Caco-2 (cell line): ENCODE measurements at regions of chr15 and their contacts with region 1.

Region 1: GRCh38 chr15:31128919-31129768 is 27.6 kb upstream of the TRPM1 start:
- DNase-seq: peak; percentile 71 to 86
- H3K4me3 ChIP-seq: no peak overlapping the region
- H3K4me3 Mint-ChIP-seq: no peak overlapping the region
- H3K27ac Mint-ChIP-seq: no peak overlapping the region
- H3K4me1 ChIP-seq: no peaks in the 10 kb centered on the region; the same call in 1 of the 2 replicates
- H3K4me1 Mint-ChIP-seq: no peaks in the 10 kb centered on the region
- H3K27me3 ChIP-seq: no peaks in the 10 kb centered on the region
- H3K27me3 Mint-ChIP-seq: no peaks in the 10 kb centered on the region
- CTCF ChIP-seq: peak; percentile 94 to 98

Region 2: GRCh38 chr15:30791239-30792175 is 337.6 kb before region 1 on chr15:
- CTCF ChIA-PET with region 1: interaction called, 3 read pairs
- POLR2A ChIA-PET with region 1: no interaction called
- intact Hi-C with region 1: loop called (anchors 10 kb)
- DNase-seq: peak; percentile 62 to 75
- H3K4me3 ChIP-seq: no peak overlapping the region
- H3K4me3 Mint-ChIP-seq: no peak overlapping the region
- H3K27ac Mint-ChIP-seq: no peak overlapping the region
- H3K4me1 ChIP-seq: no peaks in the 10 kb centered on the region
- H3K4me1 Mint-ChIP-seq: peaks cover 17% of the 10 kb centered on the region
- H3K27me3 ChIP-seq: no peaks in the 10 kb centered on the region
- H3K27me3 Mint-ChIP-seq: peaks cover 3% of the 10 kb centered on the region
- CTCF ChIP-seq: no peak

Region 3: GRCh38 chr15:30889196-30889595 is 239.9 kb before region 1 on chr15:
- CTCF ChIA-PET with region 1: interaction called, 37 read pairs
- POLR2A ChIA-PET with region 1: interaction called, 3 read pairs
- intact Hi-C with region 1: loop called (anchors 1 kb)
- DNase-seq: no peak
- H3K4me3 ChIP-seq: no peak overlapping the region
- H3K4me3 Mint-ChIP-seq: no peak overlapping the region
- H3K27ac Mint-ChIP-seq: no peak overlapping the region
- H3K4me1 ChIP-seq: no peaks in the 10 kb centered on the region
- H3K4me1 Mint-ChIP-seq: no peaks in the 10 kb centered on the region
- H3K27me3 ChIP-seq: no peaks in the 10 kb centered on the region
- H3K27me3 Mint-ChIP-seq: peaks cover 4% of the 10 kb centered on the region
- CTCF ChIP-seq: no peak

Region 4: DNA sequence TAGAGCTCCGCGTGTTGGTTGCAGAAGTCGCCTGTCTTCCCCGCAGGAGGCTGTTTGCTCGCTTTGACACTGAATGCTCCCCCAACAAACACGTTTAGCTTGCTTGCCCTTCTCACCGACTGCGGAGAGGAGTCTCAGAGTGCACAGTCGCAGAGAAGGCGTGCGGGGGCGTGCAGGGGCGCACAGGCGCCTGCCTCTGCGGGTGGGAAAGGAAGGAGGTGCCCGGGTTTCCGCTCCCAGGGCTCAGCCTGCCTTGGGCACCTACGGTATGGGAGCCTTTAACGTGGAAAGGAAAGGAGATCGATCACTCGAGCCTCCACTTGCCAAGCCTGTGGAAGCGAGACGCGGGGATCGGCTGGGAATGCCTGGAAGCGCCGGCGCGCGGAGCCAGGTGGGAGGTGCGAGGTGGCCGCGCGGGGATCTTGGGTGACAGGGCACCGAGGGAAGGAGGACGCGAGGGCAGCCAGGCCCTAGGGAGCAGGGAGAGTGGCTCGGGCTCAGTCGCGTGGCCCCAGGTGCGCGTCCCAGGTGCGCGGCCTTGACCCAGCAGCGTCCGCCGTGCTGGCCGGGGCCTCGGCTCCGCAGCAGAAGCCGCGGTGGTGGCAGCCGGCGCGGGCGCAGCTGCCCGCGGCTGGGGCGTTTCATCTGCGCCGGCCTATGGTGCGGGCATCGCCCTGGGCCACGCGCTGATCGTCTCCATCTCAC is 225.5 kb before region 1 on chr15 and contains the start of gene FAN1:
- CTCF ChIA-PET with region 1: interaction called, 21 read pairs
- POLR2A ChIA-PET with region 1: no interaction called
- intact Hi-C with region 1: no loop called
- DNase-seq: peak; percentile 91 to 94
- H3K4me3 ChIP-seq: peak within 1 kb of the TSS; percentile 96
- H3K4me3 Mint-ChIP-seq: peak within 1 kb of the TSS; percentile 97
- H3K27ac Mint-ChIP-seq: peak within 1 kb of the TSS; percentile 91
- H3K4me1 ChIP-seq: no peaks in the 10 kb centered on the region
- H3K4me1 Mint-ChIP-seq: peaks cover 6% of the 10 kb centered on the region
- H3K27me3 ChIP-seq: no peaks in the 10 kb centered on the region
- H3K27me3 Mint-ChIP-seq: no peaks in the 10 kb centered on the region
- CTCF ChIP-seq: no peak
- total RNA-seq, gene FAN1: 24.9 and 26.6 TPM in 2 replicates

Region 5: DNA sequence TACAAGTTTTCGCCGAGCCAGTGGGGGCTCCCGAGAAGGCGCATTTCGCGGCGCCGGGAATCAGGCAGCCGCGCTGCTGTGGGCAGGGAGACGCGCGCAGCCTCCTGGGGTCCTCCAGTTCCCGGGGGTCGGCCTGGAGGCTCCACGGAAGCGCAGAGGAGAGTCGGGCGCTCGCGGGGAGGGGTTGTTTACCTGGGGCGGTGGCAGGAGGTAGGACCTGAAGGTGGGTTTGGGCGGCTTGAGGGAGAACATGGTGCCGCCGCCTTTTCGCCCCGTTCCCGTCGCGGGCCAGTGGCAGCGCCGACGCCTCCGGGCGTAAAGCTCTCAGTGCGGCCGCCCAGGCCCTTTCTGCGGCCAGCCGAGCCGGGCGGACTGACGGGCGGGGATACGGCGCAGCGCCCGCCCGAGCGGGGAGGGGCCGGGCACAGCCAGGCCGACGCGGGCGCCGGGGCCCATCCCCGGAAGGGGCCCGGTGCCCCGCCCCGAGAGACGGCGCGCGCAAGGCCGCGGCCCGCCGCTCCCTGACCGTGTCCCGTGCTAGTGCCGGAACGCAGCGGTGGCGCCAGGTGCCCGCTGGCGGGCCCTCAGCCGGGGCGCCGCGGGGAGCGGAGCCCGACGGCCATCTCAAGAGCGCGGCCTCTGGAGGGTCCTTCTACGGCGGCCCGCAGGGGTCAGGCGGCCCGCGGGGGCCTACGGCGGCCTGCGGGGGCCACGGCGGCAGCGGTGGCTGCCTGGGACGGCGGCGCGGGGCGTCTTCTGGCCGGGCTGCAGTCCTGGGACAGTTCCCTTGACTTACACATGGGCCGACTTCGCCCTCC is 137.7 kb before region 1 on chr15 and contains the start of gene MTMR10:
- CTCF ChIA-PET with region 1: interaction called, 21 read pairs
- POLR2A ChIA-PET with region 1: interaction called, 3 read pairs
- intact Hi-C with region 1: loop called (anchors 1 kb)
- DNase-seq: peak; percentile 82 to 94
- H3K4me3 ChIP-seq: peak within 1 kb of the TSS; percentile 97
- H3K4me3 Mint-ChIP-seq: peak within 1 kb of the TSS; percentile 86
- H3K27ac Mint-ChIP-seq: peak within 1 kb of the TSS; percentile 90
- H3K4me1 ChIP-seq: peaks cover 20% of the 10 kb centered on the region
- H3K4me1 Mint-ChIP-seq: peaks cover 20% of the 10 kb centered on the region
- H3K27me3 ChIP-seq: no peaks in the 10 kb centered on the region
- H3K27me3 Mint-ChIP-seq: no peaks in the 10 kb centered on the region
- CTCF ChIP-seq: no peak
- total RNA-seq, gene MTMR10: 27.5 and 33.2 TPM in 2 replicates

Region 6: GRCh38 chr15:31004220-31004733 is 124.9 kb before region 1 on chr15:
- CTCF ChIA-PET with region 1: no interaction called
- POLR2A ChIA-PET with region 1: no interaction called
- intact Hi-C with region 1: no loop called
- DNase-seq: no peak
- H3K4me3 ChIP-seq: no peak overlapping the region
- H3K4me3 Mint-ChIP-seq: no peak overlapping the region
- H3K27ac Mint-ChIP-seq: no peak overlapping the region
- H3K4me1 ChIP-seq: no peaks in the 10 kb centered on the region
- H3K4me1 Mint-ChIP-seq: peaks cover 11% of the 10 kb centered on the region
- H3K27me3 ChIP-seq: no peaks in the 10 kb centered on the region
- H3K27me3 Mint-ChIP-seq: peaks cover under 1% of the 10 kb centered on the region
- CTCF ChIP-seq: no peak